GM10248 (cell line): ENCODE measurements at regions of chr12 and their contacts with region 1.

Region 1: DNA sequence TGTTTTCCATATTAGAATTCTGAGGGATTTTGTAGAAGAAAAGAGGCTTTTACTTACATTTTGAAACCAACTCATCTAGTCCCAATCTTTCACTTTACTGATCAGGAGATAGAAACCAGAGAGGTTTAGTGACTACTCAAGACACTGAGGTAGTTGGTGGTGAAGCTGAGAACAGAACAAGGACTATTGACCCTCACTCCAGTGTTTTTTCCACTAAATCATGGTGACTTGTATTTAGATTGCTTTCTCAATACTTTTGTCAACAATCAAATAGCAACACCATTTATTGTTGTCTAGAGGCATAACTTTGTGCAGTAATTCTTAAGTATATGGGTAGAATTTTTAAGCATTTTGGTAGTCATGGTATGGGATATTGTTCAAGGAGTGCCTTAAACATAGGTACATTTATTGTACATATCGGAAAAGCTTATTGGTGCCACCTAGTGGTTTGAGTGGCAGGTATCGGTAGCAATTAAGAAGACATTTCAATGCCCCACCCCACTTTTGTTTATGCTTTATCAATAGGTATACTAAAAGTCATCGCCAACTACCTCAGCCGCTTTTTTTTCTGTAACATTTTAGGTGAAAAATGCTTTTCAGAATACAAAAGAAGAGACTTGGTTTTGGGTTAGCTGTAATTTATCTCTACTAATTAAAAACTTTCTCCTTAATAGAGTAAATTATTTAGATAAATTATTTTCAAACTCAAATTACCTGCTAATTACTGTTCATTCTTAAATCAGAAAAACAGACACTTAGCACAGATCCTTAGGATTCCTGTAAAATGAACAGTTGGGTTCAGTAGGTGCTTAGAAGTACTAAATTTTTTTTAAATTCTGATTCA is 47.3 kb upstream of the PAWR start:
- DNase-seq: peak; percentile 54
- CTCF ChIP-seq: peak; percentile 59

Region 2: GRCh38 chr12:78759367-78759766 is 978.7 kb before region 1 on chr12:
- CTCF ChIA-PET with region 1: no interaction called
- POLR2A ChIA-PET with region 1: no interaction called
- DNase-seq: no peak
- CTCF ChIP-seq: no peak

Region 3: DNA sequence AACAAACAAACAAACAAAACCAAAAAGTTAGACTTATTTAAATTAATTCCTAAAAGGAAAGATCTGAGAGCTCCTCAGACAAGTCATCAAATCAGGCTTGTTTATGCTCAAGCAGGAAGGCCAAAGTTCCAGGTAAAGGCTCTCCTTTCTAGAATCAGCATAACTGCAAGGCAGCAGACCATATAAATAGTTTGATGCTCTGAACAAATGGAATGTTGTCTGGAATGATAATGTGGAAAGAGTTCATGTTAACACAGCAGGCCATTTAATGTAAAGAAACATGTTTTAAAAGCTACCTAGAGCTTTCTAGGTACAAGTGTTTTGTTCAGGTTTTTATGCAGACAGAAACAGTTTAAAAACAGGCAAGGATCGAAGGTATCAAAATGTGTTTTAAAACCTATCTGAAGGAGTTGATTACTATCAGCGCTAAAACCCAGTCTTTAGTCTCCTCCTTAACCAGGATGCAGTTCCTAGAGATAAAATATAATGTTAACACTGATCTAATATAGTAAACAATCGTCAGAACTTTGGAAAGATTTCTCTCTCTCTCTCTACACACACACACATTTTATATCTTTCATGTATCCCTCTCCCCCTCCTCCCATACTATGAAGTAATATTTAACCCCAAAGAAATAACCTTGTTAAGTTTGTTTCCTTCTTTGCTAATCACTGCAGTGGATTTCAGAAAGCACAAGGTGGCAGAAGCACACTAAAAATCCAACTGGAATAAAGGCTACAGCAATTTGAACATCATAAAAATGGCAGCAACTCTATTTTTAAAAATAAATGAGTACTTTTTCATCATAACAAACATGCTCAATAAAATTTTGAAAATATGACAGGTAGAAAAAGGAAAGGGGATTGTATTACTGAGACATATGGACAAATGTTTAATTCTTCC is 182.8 kb before region 1 on chr12:
- CTCF ChIA-PET with region 1: interaction called, 24 read pairs
- POLR2A ChIA-PET with region 1: no interaction called
- DNase-seq: no peak
- CTCF ChIP-seq: peak; percentile 77

Region 4: DNA sequence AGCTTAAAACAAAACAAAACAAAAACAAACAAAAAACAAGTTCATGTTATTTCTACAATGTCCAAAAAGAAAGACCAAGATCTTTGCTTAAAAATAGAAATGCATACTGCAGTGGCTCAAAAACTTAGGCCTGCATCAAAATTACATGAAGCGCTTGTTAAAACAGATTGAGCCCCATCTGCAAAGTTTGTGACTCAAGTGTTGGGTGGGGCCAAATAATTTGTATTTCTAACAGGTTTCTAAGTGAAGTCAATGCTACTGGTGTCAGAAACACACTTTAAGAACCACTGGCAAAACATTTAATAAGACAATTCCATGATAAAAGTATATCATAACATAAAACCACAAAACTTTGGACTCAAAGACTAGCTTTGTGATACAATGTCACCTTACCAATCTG is 152.9 kb before region 1 on chr12:
- CTCF ChIA-PET with region 1: no interaction called
- POLR2A ChIA-PET with region 1: interaction called, 10 read pairs
- DNase-seq: no peak
- CTCF ChIP-seq: no peak

Region 5: DNA sequence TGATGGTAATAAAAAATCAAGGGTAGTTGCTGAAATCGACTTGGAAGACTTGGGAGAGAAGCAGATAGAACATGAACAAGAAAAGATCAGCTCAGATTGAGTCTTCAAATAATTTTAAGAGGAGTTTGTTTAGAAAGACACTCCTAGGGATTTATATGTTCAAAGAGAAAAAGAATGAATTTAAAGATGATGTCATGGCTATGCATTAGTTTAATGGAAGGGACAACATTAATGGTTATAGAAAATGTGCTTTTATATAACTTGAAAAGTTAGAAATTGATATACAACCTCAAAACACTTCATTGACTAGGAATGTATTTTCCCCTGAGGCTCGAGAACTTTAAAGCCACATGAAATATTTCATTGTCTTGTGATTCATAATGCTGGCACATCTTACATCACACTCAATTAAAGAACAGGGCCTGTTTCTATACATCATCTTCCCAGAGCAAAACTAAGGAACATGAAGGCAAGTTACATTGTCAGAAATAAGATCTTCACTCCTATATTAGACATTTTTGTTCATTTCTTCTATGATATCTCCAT is 12.2 kb before region 1 on chr12:
- CTCF ChIA-PET with region 1: interaction called, 10 read pairs
- POLR2A ChIA-PET with region 1: no interaction called
- DNase-seq: no peak
- CTCF ChIP-seq: no peak

Region 6: GRCh38 chr12:79766705-79767464 is 28.8 kb after region 1 on chr12:
- CTCF ChIA-PET with region 1: interaction called, 12 read pairs
- POLR2A ChIA-PET with region 1: no interaction called
- DNase-seq: no peak
- CTCF ChIP-seq: no peak